ENCODE measurements at regions of chr3 and their contacts with region 1.

Region 1: DNA sequence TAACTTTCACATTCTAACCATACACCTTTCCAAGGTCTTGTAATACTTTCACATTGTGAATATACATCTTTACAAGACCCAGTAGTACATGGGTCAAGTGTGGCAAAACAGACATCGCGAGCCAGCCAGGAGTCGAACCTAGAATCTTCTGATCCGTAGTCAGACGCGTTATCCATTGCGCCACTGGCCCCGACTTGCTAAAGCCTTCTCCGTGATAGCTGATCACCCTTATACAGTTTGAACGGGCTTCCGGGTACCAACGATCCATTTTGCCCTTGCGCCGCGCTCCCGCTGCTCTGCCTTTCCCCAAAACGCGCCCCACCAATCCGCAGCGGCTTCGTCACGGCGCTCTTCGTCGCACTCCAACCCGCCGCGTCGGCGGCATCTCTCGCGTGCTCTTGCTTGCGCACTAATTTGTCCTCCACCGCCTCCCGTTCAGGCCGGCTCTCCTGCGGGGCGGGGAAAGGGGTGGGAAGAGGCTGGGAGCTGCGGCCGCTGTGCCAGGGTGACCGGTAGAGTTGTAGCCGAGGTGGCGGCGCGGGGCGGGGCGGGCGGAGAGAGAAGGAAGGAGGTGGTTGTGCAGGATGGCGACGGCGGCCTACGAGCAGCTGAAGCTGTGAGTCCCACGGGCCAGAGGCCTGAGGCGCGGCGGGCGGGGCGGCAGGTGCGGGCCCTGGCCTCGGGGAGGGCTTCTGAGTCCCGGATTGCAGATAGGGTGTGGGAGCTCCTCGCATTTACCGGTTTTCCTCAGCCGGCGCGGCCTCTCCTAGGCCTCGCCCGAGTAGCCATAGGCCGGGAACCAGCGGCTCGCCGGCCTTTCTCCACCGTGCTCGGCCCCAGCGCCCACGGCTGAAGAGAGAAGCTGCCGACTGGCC is at the start of gene SACM1L:
- DNase-seq: peak; percentile 97
- ATAC-seq: peak; percentile 83
- H3K4me3 Mint-ChIP-seq: peak within 1 kb of the TSS; percentile 81
- H3K27ac Mint-ChIP-seq: peak within 1 kb of the TSS; percentile 95
- H3K4me1 Mint-ChIP-seq: peaks cover 41% of the 10 kb centered on the region
- H3K27me3 Mint-ChIP-seq: peaks cover 3% of the 10 kb centered on the region
- CTCF ChIP-seq: no peak
- total RNA-seq, gene SACM1L: 52.6 to 56.0 TPM

Region 2: GRCh38 chr3:45443459-45443858 is 245.7 kb before region 1 on chr3:
- CTCF ChIA-PET with region 1: no interaction called
- POLR2A ChIA-PET with region 1: no interaction called
- intact Hi-C with region 1: no loop called
- DNase-seq: no peak
- ATAC-seq: no peak
- H3K4me3 Mint-ChIP-seq: no peak overlapping the region
- H3K27ac Mint-ChIP-seq: no peak overlapping the region
- H3K4me1 Mint-ChIP-seq: no peaks in the 10 kb centered on the region
- H3K27me3 Mint-ChIP-seq: no peaks in the 10 kb centered on the region
- CTCF ChIP-seq: no peak

Region 3: DNA sequence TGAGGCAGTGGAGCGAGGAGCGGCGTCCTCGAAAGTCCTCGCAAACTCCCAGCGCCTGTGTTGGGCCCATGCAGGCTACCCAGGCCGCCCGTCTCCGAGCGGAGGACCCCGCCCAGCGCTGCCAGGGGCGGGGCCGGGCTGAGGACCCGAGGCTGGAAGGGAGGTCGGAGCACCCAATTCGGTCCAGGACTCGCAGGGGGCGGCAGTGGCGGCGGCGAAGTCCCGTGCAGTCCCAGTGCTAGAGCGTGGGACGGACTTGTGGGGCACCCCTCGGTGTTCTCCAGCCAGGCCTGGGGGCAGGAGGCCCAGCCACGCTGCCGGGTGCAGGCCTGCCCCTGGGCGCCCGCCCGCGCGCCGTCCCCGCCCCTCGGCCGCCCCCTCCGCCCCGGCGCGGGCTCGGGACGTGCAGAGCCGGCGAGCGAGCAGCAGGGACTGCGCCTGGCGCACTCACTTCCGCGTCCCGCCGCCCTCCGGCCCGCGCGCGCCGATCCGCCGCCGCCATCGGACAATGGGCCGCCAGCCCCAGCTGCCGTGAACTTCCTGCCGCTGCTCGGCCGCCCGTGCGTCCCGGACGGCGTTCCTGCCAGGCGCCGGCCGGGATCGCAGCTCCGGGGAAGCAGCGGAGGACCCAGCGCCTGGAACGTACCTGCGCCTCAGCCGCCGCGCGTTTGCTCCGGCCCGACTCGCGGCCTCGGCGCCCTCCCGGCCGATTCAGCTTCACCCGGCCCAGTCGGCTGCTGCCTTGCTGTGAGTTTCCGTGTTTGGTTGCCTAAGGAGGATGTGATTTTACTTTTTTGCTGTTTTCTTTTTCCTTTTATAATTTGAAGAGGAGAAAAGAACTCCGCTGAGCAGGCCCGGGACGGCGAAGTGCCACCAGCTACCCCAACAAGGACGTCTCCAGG is 95.2 kb before region 1 on chr3:
- CTCF ChIA-PET with region 1: no interaction called
- POLR2A ChIA-PET with region 1: interaction called, 10 read pairs
- intact Hi-C with region 1: no loop called
- DNase-seq: peak; percentile 74
- ATAC-seq: peak; percentile 87
- H3K4me3 Mint-ChIP-seq: peak overlapping the region; percentile 78
- H3K27ac Mint-ChIP-seq: peak overlapping the region; percentile 86
- H3K4me1 Mint-ChIP-seq: peaks cover 46% of the 10 kb centered on the region
- H3K27me3 Mint-ChIP-seq: no peaks in the 10 kb centered on the region
- CTCF ChIP-seq: no peak

Region 4: DNA sequence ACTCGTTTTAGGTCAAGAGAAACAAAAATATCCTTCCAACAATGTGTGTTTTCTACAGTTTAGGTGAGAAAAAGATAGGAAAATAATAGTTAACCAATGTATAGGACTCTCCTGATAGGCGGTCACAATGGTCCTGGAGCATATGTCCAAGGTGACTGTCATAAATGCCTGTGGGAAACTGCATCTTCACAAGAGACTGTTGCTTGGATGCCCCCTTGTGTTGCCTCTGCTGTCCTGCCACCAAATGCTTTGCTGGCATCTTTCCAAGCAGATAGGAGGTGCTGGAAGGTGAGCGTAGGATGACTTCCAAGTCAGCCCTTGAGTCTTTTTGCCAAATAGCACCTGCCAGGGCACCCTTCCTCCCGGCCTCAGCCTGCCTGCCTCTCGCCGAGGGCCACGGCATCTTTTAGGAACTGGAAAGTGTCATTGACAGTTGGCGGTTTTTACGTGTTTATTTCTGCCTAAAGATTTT is 24.0 kb before region 1 on chr3:
- CTCF ChIA-PET with region 1: interaction called, 27 read pairs
- POLR2A ChIA-PET with region 1: interaction called, 8 read pairs
- intact Hi-C with region 1: no loop called
- DNase-seq: peak; percentile 70
- ATAC-seq: peak; percentile 21
- H3K4me3 Mint-ChIP-seq: peak overlapping the region; percentile 75
- H3K27ac Mint-ChIP-seq: peak overlapping the region; percentile 86
- H3K4me1 Mint-ChIP-seq: peaks cover 47% of the 10 kb centered on the region
- H3K27me3 Mint-ChIP-seq: no peaks in the 10 kb centered on the region
- CTCF ChIP-seq: peak; percentile 78

Region 5: DNA sequence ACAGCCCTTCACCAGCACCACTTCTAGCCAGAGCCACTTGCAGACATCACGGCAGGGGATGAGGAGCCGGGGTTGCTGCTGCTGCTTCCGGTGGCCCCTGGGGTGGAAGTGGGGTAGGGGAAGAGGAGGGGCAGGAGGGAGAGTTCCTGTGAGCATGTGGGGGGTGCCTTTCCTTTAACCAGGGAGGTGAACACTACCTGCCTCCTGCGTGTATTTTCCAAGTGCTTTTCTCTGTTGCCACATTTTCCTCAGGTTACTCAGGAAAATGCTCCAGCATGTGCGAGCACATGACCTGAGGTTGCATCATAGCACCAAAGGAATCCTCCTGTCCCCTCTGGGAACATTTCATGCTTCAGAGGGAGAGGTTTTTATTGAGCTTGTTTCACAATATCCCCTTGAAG is 12.1 kb before region 1 on chr3:
- CTCF ChIA-PET with region 1: interaction called, 4 read pairs
- POLR2A ChIA-PET with region 1: interaction called, 25 read pairs
- intact Hi-C with region 1: no loop called
- DNase-seq: peak; percentile 72
- ATAC-seq: peak; percentile 96
- H3K4me3 Mint-ChIP-seq: peak overlapping the region; percentile 51
- H3K27ac Mint-ChIP-seq: peak overlapping the region; percentile 89
- H3K4me1 Mint-ChIP-seq: peaks cover 21% of the 10 kb centered on the region
- H3K27me3 Mint-ChIP-seq: no peaks in the 10 kb centered on the region
- CTCF ChIP-seq: no peak

Region 6: GRCh38 chr3:45915518-45916231 is 226.6 kb after region 1 on chr3:
- CTCF ChIA-PET with region 1: no interaction called
- POLR2A ChIA-PET with region 1: no interaction called
- intact Hi-C with region 1: loop called (anchors 10 kb)
- DNase-seq: peak; percentile 91
- ATAC-seq: peak; percentile 93
- H3K4me3 Mint-ChIP-seq: peak overlapping the region; percentile 51
- H3K27ac Mint-ChIP-seq: peak overlapping the region; percentile 50
- H3K4me1 Mint-ChIP-seq: peaks cover 37% of the 10 kb centered on the region
- H3K27me3 Mint-ChIP-seq: peaks cover 11% of the 10 kb centered on the region
- CTCF ChIP-seq: no peak

Measured in activated CD8-positive, alpha-beta T cell treated with anti-CD3 and anti-CD28 coated beads for 36 hours (primary cell).